Aorta (tissue), 5 donors: ENCODE measurements at regions of chr2 and their contacts with region 1.

Region 1: DNA sequence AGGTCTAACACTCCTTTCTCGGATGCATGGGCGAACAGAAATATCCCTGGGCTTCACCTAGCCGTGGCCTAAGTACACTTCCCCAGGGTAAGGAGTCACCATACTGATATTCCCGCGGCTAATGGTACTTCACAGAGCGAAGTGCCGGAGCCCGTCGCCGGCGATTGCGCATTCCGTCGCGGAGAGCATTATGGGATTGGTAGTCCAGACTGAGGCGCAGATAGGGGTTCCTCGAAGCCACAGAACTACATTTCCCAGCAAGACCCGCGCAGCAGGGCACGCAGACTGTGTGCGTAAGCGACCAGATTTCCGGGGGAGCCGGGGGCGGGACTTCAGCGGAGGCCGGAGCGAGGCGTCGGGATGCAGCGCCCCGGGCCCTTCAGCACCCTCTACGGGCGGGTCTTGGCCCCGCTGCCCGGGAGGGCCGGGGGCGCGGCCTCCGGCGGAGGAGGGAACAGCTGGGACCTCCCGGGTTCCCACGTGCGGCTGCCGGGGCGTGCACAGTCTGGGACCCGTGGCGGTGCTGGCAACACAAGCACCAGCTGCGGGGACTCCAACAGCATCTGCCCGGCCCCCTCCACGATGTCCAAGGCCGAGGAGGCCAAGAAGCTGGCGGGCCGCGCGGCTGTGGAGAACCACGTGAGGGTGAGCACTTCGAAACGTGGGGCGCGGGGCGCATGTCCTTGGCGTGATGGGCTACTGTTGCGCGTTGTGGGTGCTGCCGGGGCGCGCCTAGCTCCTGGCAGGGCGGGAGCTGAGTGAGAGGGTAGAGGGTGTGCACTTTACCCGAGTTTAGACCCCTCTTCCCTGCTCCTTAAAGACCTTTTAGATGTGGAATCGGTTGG is at the start of gene RPIA:
- DNase-seq: peak; percentile 99 to 100
- ATAC-seq: peak; percentile 100
- H3K4me3 ChIP-seq: peak within 1 kb of the TSS; percentile 64 to 75
- H3K27ac ChIP-seq: peak within 1 kb of the TSS in 1 of 2 donors; percentile 88
- H3K4me1 ChIP-seq: no peaks in the 10 kb centered on the region
- H3K27me3 ChIP-seq: no peaks in the 10 kb centered on the region
- total RNA-seq, gene RPIA: 9.8 to 10.3 TPM

Region 2: GRCh38 chr2:88627056-88627855 is 64.3 kb before region 1 on chr2 and contains the start of gene EIF2AK3:
- intact Hi-C with region 1: loop called in 1 of 2 experiments (anchors 1 kb)
- DNase-seq: peak; percentile 99
- ATAC-seq: peak; percentile 96
- H3K4me3 ChIP-seq: peak within 1 kb of the TSS; percentile 73 to 77
- H3K27ac ChIP-seq: peak within 1 kb of the TSS; percentile 62 to 100
- H3K4me1 ChIP-seq: peaks cover 0 to 5% of the 10 kb centered on the region in 2 donors
- H3K27me3 ChIP-seq: no peaks in the 10 kb centered on the region
- total RNA-seq, gene EIF2AK3: 24.8 to 25.3 TPM